ENCODE measurements at regions of chr1 and their contacts with region 1.

Region 1: DNA sequence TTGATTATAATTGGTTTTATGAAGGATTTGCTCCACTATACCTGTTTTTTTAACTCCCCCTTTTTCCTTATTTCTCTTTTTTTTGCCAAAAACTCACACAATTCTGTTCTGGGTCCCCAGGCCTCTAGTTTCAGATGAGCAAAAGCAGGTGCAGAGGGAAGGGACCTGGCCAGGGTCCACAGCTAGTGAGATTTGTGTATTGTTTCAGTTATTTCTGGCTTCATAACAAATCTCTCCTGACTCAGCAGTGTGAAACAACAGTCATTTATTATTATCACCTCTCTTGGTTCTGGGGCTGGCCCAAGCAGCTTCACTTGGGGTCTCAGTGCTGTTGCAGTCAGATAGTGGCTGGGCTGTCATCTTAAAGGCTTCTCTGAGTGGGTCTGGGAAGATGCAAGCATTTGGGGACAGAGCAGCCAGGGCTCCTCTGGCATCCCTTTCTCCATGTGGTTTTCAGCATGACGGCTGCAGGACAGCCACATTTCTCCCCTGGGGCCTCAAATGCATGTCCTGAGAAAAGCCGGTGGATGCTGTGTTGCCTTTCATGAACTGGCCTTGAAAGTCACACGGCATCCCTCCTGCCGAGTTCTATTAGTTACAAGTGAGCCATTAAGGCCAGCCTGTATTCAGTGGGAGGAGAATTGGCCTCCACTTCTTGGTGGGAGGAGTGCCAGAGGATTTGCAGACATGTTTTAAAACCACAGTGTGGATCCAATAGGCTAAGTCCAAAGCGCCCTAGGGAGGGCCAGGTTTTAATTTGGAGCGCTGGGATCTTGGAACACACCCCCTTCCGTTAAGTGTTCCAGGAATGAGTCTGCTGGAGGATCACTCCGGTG is 137.1 kb downstream of the CAMTA1 start:
- DNase-seq: peak; percentile 72
- H3K4me3 ChIP-seq: no peak overlapping the region
- H3K27ac ChIP-seq: no peak overlapping the region
- H3K4me1 ChIP-seq: no peaks in the 10 kb centered on the region
- H3K27me3 ChIP-seq: no peaks in the 10 kb centered on the region
- CTCF ChIP-seq: no peak

Region 2: DNA sequence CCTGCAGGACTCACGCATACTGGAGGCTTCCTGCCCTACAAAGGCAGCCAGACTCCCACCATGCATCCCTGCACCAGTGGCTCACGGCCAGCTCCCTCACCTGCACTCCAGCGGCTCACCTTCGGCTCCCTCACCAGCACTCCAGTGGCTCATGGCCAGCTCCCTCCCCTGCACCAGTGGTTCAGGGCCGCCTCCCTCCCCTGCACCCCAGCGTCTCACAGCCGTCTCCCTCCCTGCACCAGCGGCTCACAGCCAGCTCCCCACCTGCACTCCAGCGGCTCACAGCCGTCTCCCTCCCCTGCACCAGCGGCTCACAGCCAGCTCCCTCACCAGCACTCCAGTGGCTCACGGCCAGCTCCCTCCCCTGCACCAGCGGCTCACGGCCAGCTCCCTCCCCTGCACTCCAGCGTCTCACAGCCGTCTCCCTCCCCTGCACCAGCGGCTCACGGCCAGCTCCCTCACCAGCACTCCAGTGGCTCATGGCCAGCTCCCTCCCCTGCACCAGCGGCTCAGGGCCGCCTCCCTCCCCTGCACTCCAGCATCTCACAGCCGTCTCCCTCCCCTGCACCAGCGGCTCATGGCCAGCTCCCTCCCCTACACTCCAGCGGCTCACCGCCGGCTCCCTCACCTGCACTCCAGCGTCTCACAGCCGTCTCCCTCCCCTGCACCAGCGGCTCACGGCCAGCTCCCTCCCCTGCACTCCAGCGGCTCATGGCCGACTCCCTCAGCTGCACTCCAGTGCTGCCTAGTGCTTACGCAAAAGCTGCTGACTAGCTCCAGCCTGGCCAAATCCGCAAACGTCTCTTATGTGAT is 1254.6 kb before region 1 on chr1:
- CTCF ChIA-PET with region 1: no interaction called
- POLR2A ChIA-PET with region 1: interaction called, 11 read pairs
- intact Hi-C with region 1: no loop called
- DNase-seq: peak; percentile 16
- H3K4me3 ChIP-seq: no peak overlapping the region
- H3K27ac ChIP-seq: no peak overlapping the region
- H3K4me1 ChIP-seq: no peaks in the 10 kb centered on the region
- H3K27me3 ChIP-seq: peaks cover 11% of the 10 kb centered on the region
- CTCF ChIP-seq: no peak

Region 3: DNA sequence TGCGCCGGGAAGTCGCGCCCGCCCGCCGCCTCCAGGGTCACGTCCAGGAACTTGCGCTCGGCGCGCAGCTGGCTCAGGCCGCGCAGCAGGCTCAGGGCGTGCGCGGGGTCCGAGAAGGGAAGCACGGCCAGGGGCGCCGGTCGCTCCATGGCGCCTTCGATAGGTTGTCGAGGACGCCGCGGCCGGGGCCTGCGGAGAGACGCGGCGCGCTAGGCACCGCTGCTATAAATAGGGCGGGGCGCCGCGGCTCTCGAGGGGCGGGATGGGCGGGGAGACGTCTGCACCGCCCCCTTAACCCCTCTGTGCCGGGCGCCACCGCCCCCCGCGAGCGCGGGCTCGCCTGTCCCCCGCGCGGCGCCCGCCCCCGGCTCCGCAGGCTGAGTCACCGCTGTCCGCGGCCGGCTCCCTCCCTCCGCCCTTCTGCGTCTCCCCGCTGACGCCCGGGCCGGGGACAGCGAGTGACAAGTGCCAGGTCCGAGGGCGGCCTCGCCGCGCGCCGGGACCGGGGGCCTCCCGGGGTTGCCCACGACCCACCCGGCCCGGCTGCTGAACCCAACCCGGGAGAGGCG is 319.6 kb before region 1 on chr1 and contains the start of gene KLHL21:
- CTCF ChIA-PET with region 1: no interaction called
- POLR2A ChIA-PET with region 1: interaction called, 10 read pairs
- intact Hi-C with region 1: no loop called
- DNase-seq: peak; percentile 93
- H3K4me3 ChIP-seq: peak within 1 kb of the TSS; percentile 89
- H3K27ac ChIP-seq: peak within 1 kb of the TSS; percentile 83
- H3K4me1 ChIP-seq: peaks cover 11% of the 10 kb centered on the region
- H3K27me3 ChIP-seq: no peaks in the 10 kb centered on the region
- CTCF ChIP-seq: no peak
- total RNA-seq, gene KLHL21: 29.4 and 38.0 TPM in 2 replicates

Region 4: GRCh38 chr1:6634371-6635052 is 287.8 kb before region 1 on chr1:
- CTCF ChIA-PET with region 1: no interaction called
- POLR2A ChIA-PET with region 1: no interaction called
- intact Hi-C with region 1: no loop called
- DNase-seq: peak; percentile 45
- H3K4me3 ChIP-seq: no peak overlapping the region
- H3K27ac ChIP-seq: no peak overlapping the region
- H3K4me1 ChIP-seq: no peaks in the 10 kb centered on the region
- H3K27me3 ChIP-seq: no peaks in the 10 kb centered on the region
- CTCF ChIP-seq: peak; percentile 56

Region 5: DNA sequence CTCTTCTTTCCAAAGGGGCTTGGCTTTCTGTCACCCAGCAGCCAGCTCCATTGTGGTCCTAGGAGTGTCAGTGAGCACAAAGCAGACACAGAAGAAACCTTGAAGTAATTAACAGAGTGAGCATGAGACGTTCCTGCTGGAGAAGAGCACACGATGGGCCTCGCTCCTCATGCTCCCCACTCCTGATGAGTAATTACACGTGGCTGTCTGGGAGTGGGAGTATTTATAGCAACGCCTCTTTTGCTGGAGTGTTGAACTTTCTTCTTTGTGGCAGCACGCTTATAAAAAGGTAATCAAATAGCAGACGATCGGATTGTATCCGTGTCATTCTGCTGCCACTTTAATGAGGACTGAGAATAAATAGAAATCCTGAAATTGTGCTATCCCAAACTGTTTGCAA is 48.7 kb after region 1 on chr1:
- CTCF ChIA-PET with region 1: no interaction called
- POLR2A ChIA-PET with region 1: no interaction called
- intact Hi-C with region 1: no loop called
- DNase-seq: no peak
- H3K4me3 ChIP-seq: no peak overlapping the region
- H3K27ac ChIP-seq: no peak overlapping the region
- H3K4me1 ChIP-seq: no peaks in the 10 kb centered on the region
- H3K27me3 ChIP-seq: peaks cover 4% of the 10 kb centered on the region
- CTCF ChIP-seq: no peak

Measured in A673 (cell line).